Heart left ventricle (tissue), 16 donors: ENCODE measurements at regions of chr20 and their contacts with region 1.

Region 1: DNA sequence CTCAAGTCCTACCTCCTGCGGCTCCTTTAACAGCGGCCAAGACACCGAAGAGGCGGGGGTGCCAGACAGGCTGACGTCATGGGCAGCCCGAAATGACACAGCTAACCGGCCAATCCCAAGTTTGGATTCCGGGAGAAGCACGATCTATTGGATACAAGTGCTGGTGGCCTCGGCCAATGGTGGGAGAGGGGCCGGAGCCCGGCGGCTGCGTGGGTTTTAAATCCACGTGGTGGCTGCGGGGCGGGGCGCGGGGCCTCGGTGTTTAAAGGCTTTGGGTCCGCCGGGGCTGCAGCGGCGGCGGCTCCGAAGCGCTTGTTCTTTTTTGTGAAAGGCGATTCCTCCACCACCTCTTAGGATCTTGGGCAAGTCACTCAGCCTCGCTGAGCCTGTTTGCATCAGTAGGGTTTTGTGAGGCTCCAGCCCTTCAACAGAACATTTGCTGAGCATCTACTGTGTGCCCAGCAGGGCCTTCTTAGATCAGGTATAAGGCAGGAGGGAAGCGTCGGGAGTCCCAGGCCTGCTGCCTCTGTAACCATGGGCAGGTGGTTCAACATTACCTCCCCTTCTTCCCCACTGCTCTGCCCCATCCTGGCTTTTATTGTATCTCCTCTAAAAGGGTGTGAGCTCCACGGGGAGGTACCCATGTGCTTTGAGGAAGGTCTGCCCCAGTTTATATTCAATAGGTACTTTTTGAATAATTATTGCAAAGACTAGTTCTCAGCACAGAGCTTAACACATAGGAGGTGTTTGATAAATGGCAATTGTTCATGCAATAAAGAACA is 8.9 kb upstream of the PMEPA1 start:
- DNase-seq: peak; percentile 96 to 98 (median 97)
- ATAC-seq: peak; percentile 95 to 97 (median 96)
- H3K4me3 ChIP-seq: peak overlapping the region in 10 of 12 donors; percentile 23 to 52 (median 40)
- H3K27ac ChIP-seq: peak overlapping the region in 1 of 12 donors; percentile 28
- H3K4me1 ChIP-seq: peaks cover 0 to 47% (median 25%) of the 10 kb centered on the region in 12 donors
- H3K27me3 ChIP-seq: no peaks in the 10 kb centered on the region
- CTCF ChIP-seq: no peak
- POLR2A ChIP-seq: no peak

Region 2: GRCh38 chr20:57391074-57391554 is 327.6 kb before region 1 on chr20 and contains the start of gene RBM38:
- intact Hi-C with region 1: loop called in 1 of 10 experiments (anchors 10 kb)
- DNase-seq: peak; percentile 66 to 89 (median 75)
- ATAC-seq: peak; percentile 24 to 77 (median 62)
- H3K4me3 ChIP-seq: peak within 1 kb of the TSS; percentile 63 to 94 (median 75)
- H3K27ac ChIP-seq: peak within 1 kb of the TSS; percentile 80 to 97 (median 90)
- H3K4me1 ChIP-seq: peaks cover 10 to 70% (median 51%) of the 10 kb centered on the region in 12 donors
- H3K27me3 ChIP-seq: no peaks in the 10 kb centered on the region
- CTCF ChIP-seq: no peak
- POLR2A ChIP-seq: no peak
- total RNA-seq, gene RBM38: 45.6 to 97.9 (median 62.3) TPM

Region 3: DNA sequence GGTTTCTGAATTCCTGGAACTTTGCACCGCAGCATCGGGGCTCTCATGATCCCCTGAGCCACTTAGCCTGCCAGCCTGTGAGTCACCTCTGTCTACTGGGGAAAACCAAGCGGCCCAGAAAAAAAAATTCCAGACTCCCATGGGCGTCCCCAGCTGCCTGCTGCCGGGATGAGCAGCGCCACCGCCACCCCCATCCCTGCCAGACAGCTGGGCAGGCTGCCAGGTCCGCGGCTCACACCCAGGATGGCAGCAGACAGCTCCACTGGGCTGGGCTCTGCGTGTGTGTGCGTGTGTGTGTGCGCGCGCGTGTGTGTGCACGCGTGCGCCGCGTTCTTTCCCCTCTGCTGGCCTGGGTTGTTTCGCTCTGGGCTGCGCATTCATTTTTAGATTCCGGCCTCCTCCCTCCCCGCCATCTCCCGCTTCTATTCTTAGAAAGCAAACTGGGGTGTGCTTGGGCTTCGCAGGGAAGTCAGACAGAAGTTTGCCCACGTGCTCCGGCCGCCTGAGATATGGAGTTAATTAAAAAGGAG is 30.0 kb after region 1 on chr20:
- intact Hi-C with region 1: loop called in 4 of 10 experiments (anchors 2 to 5 kb)
- DNase-seq: peak; percentile 86 to 93 (median 88)
- ATAC-seq: peak; percentile 82 to 92 (median 88)
- H3K4me3 ChIP-seq: peak overlapping the region in 10 of 12 donors; percentile 6 to 49 (median 42)
- H3K27ac ChIP-seq: peak overlapping the region; percentile 1 to 92 (median 84)
- H3K4me1 ChIP-seq: peaks cover 9 to 34% (median 29%) of the 10 kb centered on the region in 12 donors
- H3K27me3 ChIP-seq: no peaks in the 10 kb centered on the region
- CTCF ChIP-seq: peak in 1 of 12 donors; percentile 30
- POLR2A ChIP-seq: no peak

Region 4: DNA sequence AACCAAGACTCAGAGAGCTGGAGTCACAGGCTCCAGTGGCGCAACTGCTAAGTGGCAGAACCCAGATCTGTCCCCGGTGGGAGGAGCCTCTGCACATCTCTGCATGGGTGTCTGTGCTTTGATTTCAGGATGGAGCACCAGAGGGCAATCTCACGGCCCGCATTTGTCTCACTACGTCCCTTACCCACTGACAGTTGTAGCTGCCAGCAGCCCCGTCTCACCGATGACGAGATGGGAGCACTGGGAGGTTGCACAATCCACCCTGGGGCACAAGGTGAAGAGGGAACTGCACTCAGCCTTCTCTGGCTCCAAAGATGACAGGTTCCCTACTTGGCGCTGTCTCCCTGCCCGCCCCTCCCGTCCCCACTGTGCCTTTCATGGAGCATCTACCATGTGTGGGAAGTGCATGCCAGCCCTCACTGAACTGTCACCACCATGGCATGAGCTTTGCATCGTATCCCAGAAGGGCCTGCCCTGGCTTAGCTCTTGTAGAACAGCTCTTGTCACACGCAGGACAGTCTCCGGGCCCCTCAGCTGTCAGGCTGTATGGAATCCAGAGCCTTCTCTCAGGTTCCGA is 91.0 kb after region 1 on chr20:
- intact Hi-C with region 1: loop called in 1 of 10 experiments (anchors 5 kb)
- DNase-seq: peak in 2 of 5 donors; percentile 58 to 67
- ATAC-seq: peak; percentile 40 to 75 (median 51)
- H3K4me3 ChIP-seq: no peak overlapping the region
- H3K27ac ChIP-seq: no peak overlapping the region
- H3K4me1 ChIP-seq: peaks cover 0 to 13% (median 0%) of the 10 kb centered on the region in 12 donors
- H3K27me3 ChIP-seq: no peaks in the 10 kb centered on the region
- CTCF ChIP-seq: no peak
- POLR2A ChIP-seq: no peak

Region 5: GRCh38 chr20:57991211-57991881 is 272.7 kb after region 1 on chr20:
- intact Hi-C with region 1: loop called in 1 of 10 experiments (anchors 10 kb)
- DNase-seq: peak in 1 of 5 donors; percentile 46
- ATAC-seq: peak in 2 of 4 donors; percentile 52 to 61
- H3K4me3 ChIP-seq: no peak overlapping the region
- H3K27ac ChIP-seq: peak overlapping the region in 1 of 12 donors; percentile 26
- H3K4me1 ChIP-seq: peaks cover 0 to 26% (median 6%) of the 10 kb centered on the region in 12 donors
- H3K27me3 ChIP-seq: no peaks in the 10 kb centered on the region
- CTCF ChIP-seq: no peak
- POLR2A ChIP-seq: no peak

Region 6: DNA sequence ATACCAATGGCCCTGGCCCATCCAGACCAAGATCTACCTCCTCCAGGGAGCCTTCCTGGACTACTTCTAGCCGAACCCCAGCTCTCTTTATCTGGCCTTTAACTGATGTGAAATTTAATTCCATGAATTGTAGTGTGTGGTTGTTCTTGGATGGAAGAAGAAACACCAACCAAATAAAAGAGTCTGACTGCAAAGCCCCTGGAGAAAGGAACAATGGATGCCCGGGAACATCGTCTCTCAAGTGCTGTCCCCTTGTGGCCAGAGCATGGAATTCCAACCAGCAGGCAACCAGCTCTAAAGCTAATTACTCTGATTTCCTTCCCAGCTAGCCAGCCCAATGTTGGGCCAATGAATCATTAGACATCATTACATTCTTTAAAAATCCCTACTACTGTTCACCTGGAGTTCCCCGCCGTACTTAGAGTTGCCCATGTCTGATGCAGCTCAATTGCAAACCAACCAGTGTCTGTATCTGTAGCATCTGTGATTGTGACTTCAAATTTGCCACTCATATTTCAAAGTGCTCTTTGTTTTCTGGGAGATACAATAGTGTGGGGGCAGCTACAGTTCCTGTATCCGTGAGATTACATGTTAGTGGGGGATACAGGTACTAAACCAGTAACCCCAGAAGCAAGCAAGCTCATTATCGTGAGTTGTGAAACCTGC is 368.6 kb after region 1 on chr20:
- intact Hi-C with region 1: loop called in 1 of 10 experiments (anchors 10 kb)
- DNase-seq: peak in 2 of 5 donors; percentile 38 to 47
- ATAC-seq: peak in 2 of 4 donors; percentile 26 to 72
- H3K4me3 ChIP-seq: no peak overlapping the region
- H3K27ac ChIP-seq: no peak overlapping the region
- H3K4me1 ChIP-seq: no peaks in the 10 kb centered on the region
- H3K27me3 ChIP-seq: peaks cover 0 to 7% (median 0%) of the 10 kb centered on the region in 9 donors
- CTCF ChIP-seq: peak; percentile 81 to 96 (median 88)
- POLR2A ChIP-seq: no peak